Dorsolateral prefrontal cortex (tissue), 120 donors: ENCODE measurements at regions of chr2 and their contacts with region 1.

Region 1: GRCh38 chr2:144770616-144771230 is 250.8 kb upstream of the ZEB2 start:
- DNase-seq: no peak
- H3K4me3 ChIP-seq: peak overlapping the region in 46 of 59 donors; percentile 2 to 55 (median 28)
- H3K27ac ChIP-seq: peak overlapping the region in 5 of 59 donors; percentile 2 to 31 (median 21)
- H3K27me3 ChIP-seq: peaks cover 0 to 6% (median 0%) of the 10 kb centered on the region in 45 donors
- CTCF ChIP-seq: no peak

Region 2: GRCh38 chr2:144712550-144712940 is 58.2 kb before region 1 on chr2:
- intact Hi-C with region 1: loop called in 1 of 2 experiments (anchors 5 kb)
- DNase-seq: no peak
- H3K4me3 ChIP-seq: no peak overlapping the region
- H3K27ac ChIP-seq: peak overlapping the region in 14 of 59 donors; percentile 12 to 72 (median 52)
- H3K27me3 ChIP-seq: no peaks in the 10 kb centered on the region
- CTCF ChIP-seq: no peak